Right ventricle myocardium inferior (tissue), 1 donor: ENCODE measurements at regions of chr7 and their contacts with region 1.

Region 1: GRCh38 chr7:152436111-152436930 is 518 bp upstream of the KMT2C start:
- DNase-seq: peak; percentile 95
- ATAC-seq: peak; percentile 90

Region 2: DNA sequence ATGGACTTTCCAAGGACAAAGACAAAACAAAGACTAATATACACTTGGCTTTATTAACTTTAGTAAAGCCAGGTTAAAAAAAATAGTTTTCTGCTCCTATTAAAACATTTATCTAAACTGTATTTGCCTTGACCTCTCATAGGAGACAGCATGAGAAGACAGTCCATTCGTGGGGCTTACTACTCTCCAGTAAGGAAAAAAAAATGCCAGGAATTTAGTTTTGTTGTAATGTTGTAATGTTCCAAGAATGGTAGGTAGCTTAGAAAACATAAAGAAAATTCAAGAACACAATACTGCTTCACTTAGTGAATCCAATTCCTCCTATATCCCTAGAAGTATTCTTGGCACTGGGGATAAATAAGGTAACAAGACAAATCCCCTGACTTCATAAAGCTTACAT is 82.3 kb before region 1 on chr7:
- intact Hi-C with region 1: no loop called
- DNase-seq: no peak
- ATAC-seq: no peak

Region 3: GRCh38 chr7:152463709-152464311 is 27.5 kb after region 1 on chr7:
- intact Hi-C with region 1: loop called (anchors 1 kb)
- DNase-seq: peak; percentile 100
- ATAC-seq: peak; percentile 96